Heart right ventricle (tissue), 16 donors: ENCODE measurements at regions of chr2 and their contacts with region 1.

Region 1: DNA sequence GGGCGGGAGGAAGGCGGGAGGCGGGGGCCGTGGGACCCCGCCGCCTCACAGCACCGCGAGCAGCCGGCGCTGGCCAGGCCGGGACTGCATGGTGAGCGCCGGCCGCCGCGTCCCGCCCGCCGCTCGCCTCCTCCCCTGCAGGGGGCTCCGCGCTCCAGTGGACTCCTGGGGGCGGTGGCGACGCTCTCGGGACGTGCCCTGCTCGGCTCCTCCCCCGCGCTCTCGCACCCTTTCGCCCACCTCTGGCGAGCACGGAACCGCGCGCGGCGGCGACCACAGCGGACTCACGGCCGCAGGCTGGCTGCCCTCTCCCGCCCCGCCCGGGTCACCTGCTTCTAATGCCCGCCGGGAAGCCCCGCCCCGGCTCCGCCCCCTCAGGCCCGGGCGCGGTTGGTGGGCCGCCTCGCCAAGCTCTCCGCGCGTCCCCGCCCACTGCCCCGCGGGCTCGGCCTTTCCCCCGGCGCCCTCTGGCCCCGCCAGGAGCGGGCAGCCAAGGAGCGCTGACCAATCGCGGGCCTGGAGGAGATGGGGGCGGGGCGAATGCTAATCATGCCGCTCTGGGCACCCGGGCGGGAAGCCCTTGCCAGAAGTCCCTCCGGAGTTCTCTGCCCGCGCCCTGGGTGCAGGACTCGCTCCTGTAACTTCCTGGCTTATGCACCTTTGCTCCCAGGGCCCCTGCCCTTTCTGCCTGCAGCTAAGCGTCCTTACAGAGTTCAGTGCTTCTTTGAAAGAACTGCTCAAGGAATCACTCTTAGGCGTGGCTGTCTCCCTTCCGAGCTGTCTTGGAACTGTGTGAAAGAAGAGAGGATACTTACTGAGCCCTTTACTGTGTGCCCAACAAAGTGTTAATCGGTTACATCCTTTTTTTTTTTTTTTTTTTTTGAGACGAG is at the start of gene FZD5:
- DNase-seq: peak; percentile 94 to 98
- ATAC-seq: peak; percentile 92 to 97 (median 96)
- H3K4me3 ChIP-seq: peak within 1 kb of the TSS; percentile 71 to 94 (median 82)
- H3K27ac ChIP-seq: peak within 1 kb of the TSS; percentile 49 to 89 (median 80)
- H3K4me1 ChIP-seq: peaks cover 6 to 65% (median 27%) of the 10 kb centered on the region in 9 donors
- H3K27me3 ChIP-seq: no peaks in the 10 kb centered on the region
- CTCF ChIP-seq: peak; percentile 40 to 77 (median 63)
- total RNA-seq, gene FZD5: 3.0 to 5.7 (median 5.0) TPM

Region 2: DNA sequence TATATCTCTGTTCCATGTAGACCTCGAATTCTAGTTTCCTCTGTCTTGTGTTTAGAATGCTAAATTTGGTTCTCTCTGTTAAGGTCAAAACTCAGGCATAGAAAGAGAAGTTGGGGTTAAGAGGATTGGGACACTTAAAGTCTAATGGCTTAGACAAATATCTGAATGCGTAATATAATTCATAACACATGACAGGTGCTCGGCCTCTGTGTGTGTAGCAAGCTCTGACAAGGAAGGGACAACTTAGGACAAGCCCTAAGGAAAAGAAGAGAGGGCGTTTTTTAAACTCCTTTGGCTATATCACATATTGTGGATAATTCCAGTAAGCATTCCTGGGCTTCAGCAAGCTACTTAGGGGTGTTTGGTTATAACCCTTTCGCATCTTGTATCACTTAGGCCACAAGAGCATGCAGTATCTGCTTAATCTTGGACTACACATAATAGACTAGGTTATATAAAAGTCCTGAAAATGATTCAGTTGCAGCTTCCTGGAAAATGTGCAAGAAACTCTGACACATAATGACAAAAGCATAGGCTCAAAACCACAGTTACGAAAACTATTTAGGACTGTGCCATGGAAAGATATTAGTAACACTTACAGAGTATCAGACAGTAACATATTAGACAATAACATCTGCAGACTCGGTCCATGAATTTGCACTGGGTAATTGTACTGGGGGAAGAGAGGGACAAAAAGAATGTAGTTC is 256.1 kb before region 1 on chr2:
- intact Hi-C with region 1: no loop called
- DNase-seq: no peak
- ATAC-seq: peak in 5 of 8 donors; percentile 22 to 74 (median 46)
- H3K4me3 ChIP-seq: no peak overlapping the region
- H3K27ac ChIP-seq: peak overlapping the region in 1 of 10 donors; percentile 60
- H3K4me1 ChIP-seq: peaks cover 0 to 15% (median 0%) of the 10 kb centered on the region in 9 donors
- H3K27me3 ChIP-seq: no peaks in the 10 kb centered on the region
- CTCF ChIP-seq: no peak

Region 3: GRCh38 chr2:207546822-207547221 is 223.0 kb before region 1 on chr2:
- intact Hi-C with region 1: no loop called
- DNase-seq: no peak
- ATAC-seq: no peak
- H3K4me3 ChIP-seq: no peak overlapping the region
- H3K27ac ChIP-seq: peak overlapping the region in 2 of 10 donors; percentile 16 to 49
- H3K4me1 ChIP-seq: peaks cover 5 to 58% (median 40%) of the 10 kb centered on the region in 9 donors
- H3K27me3 ChIP-seq: no peaks in the 10 kb centered on the region
- CTCF ChIP-seq: no peak

Region 4: GRCh38 chr2:207734264-207734635 is 35.6 kb before region 1 on chr2:
- intact Hi-C with region 1: no loop called
- DNase-seq: no peak
- ATAC-seq: peak in 3 of 8 donors; percentile 52 to 74 (median 74)
- H3K4me3 ChIP-seq: no peak overlapping the region
- H3K27ac ChIP-seq: no peak overlapping the region
- H3K4me1 ChIP-seq: no peaks in the 10 kb centered on the region
- H3K27me3 ChIP-seq: no peaks in the 10 kb centered on the region
- CTCF ChIP-seq: peak in 8 of 9 donors; percentile 10 to 64 (median 42)

Region 5: GRCh38 chr2:207828361-207829057 is 58.7 kb after region 1 on chr2:
- intact Hi-C with region 1: loop called in 1 of 10 experiments (anchors 5 kb)
- DNase-seq: no peak
- ATAC-seq: no peak
- H3K4me3 ChIP-seq: no peak overlapping the region
- H3K27ac ChIP-seq: no peak overlapping the region
- H3K4me1 ChIP-seq: peaks cover 0 to 44% (median 20%) of the 10 kb centered on the region in 9 donors
- H3K27me3 ChIP-seq: no peaks in the 10 kb centered on the region
- CTCF ChIP-seq: no peak

Region 6: GRCh38 chr2:207956771-207957170 is 186.9 kb after region 1 on chr2:
- intact Hi-C with region 1: loop called in 1 of 10 experiments (anchors 5 kb)
- DNase-seq: no peak
- ATAC-seq: no peak
- H3K4me3 ChIP-seq: no peak overlapping the region
- H3K27ac ChIP-seq: no peak overlapping the region
- H3K4me1 ChIP-seq: peaks cover 0 to 16% (median 11%) of the 10 kb centered on the region in 9 donors
- H3K27me3 ChIP-seq: no peaks in the 10 kb centered on the region
- CTCF ChIP-seq: no peak

Region 7: DNA sequence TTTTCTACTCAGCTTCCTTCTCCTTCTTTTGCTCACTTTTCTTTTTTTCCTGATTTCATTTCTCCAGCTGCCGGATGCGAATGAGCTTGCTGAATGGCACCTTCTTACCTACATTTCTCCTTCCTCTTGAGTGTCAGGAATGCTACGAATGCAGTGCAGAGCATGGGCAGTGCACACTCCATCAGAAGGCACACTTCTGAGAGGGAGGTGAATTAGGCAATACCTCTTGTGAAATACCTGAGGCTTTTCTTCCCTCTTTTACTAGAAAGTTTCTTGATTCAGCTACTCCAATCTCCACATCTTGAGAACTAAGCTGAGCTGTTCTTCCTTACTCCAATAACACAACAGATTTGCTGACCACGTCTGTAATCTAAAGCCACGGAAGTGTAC is 204.4 kb after region 1 on chr2:
- intact Hi-C with region 1: loop called (anchors 1 to 10 kb)
- DNase-seq: no peak
- ATAC-seq: no peak
- H3K4me3 ChIP-seq: no peak overlapping the region
- H3K27ac ChIP-seq: no peak overlapping the region
- H3K4me1 ChIP-seq: peaks cover 0 to 20% (median 8%) of the 10 kb centered on the region in 9 donors
- H3K27me3 ChIP-seq: no peaks in the 10 kb centered on the region
- CTCF ChIP-seq: no peak

Region 8: DNA sequence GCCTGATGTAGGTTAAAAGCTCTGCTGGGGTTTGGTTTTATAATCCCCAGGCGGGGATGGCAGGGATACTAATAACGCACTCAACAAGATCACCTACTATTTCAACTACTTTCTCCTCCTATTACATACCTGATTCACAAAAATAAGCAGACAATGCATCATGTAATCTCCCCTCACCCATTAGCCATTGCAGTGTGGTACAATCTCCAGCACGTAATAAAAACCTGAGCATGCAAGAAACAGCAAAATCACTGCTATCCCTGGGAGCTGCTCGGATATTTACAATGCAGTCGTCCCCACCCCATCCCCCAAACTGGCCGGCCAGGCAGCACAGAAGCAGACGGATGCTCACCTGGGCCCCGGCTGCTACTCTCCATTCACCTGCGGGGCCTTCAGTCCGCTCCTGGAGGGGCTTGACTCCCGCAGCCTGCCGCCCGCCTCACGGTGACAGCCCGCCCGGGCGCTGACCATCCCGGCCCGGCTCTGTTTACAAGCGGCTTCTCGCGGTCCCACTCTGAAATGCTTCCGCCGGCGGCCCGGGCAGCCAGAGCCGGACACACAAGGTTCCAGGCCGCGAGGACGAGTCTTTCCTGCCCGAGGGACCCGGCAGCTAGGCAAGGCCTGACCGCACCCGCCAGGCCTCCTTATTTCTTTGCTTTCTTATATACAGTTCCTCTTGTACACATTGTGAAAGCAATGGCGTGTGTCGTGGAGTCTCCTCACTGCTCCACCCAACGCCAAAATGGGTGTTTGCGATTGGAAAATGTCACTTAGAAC is 255.4 kb after region 1 on chr2 and contains the start of gene PLEKHM3:
- intact Hi-C with region 1: loop called in 4 of 10 experiments (anchors 5 kb)
- DNase-seq: peak; percentile 86 to 87
- ATAC-seq: peak; percentile 96 to 99 (median 98)
- H3K4me3 ChIP-seq: peak within 1 kb of the TSS; percentile 71 to 98 (median 84)
- H3K27ac ChIP-seq: peak within 1 kb of the TSS; percentile 62 to 94 (median 79)
- H3K4me1 ChIP-seq: peaks cover 0 to 30% (median 23%) of the 10 kb centered on the region in 9 donors
- H3K27me3 ChIP-seq: no peaks in the 10 kb centered on the region
- CTCF ChIP-seq: no peak
- total RNA-seq, gene PLEKHM3: 9.9 to 16.2 (median 15.2) TPM

Region 9: GRCh38 chr2:208033758-208034502 is 264.1 kb after region 1 on chr2:
- intact Hi-C with region 1: loop called in 4 of 10 experiments (anchors 5 kb)
- DNase-seq: peak in 1 of 2 donors; percentile 32
- ATAC-seq: peak in 5 of 8 donors; percentile 39 to 81 (median 61)
- H3K4me3 ChIP-seq: no peak overlapping the region
- H3K27ac ChIP-seq: no peak overlapping the region
- H3K4me1 ChIP-seq: peaks cover 0 to 12% (median 5%) of the 10 kb centered on the region in 9 donors
- H3K27me3 ChIP-seq: no peaks in the 10 kb centered on the region
- CTCF ChIP-seq: peak in 8 of 9 donors; percentile 22 to 58 (median 42)